Psoas muscle (tissue), 8 donors: ENCODE measurements at regions of chr12 and their contacts with region 1.

Region 1: GRCh38 chr12:17853054-17853453 is 236.9 kb downstream of the RERGL start:
- DNase-seq: no peak
- ATAC-seq: no peak
- H3K4me3 ChIP-seq: no peak overlapping the region
- H3K27ac ChIP-seq: no peak overlapping the region
- H3K4me1 ChIP-seq: no peaks in the 10 kb centered on the region
- H3K27me3 ChIP-seq: no peaks in the 10 kb centered on the region
- CTCF ChIP-seq: no peak

Region 2: GRCh38 chr12:17763366-17763765 is 89.7 kb before region 1 on chr12:
- intact Hi-C with region 1: loop called (anchors 2 kb)
- DNase-seq: no peak
- ATAC-seq: no peak
- H3K4me3 ChIP-seq: no peak overlapping the region
- H3K27ac ChIP-seq: no peak overlapping the region
- H3K4me1 ChIP-seq: no peaks in the 10 kb centered on the region
- H3K27me3 ChIP-seq: no peaks in the 10 kb centered on the region
- CTCF ChIP-seq: no peak

Region 3: GRCh38 chr12:17818931-17819330 is 34.1 kb before region 1 on chr12:
- intact Hi-C with region 1: no loop called
- DNase-seq: no peak
- ATAC-seq: no peak
- H3K4me3 ChIP-seq: no peak overlapping the region
- H3K27ac ChIP-seq: no peak overlapping the region
- H3K4me1 ChIP-seq: no peaks in the 10 kb centered on the region
- H3K27me3 ChIP-seq: no peaks in the 10 kb centered on the region
- CTCF ChIP-seq: no peak